Activated naive CD4-positive, alpha-beta T cell treated with anti-CD3 and anti-CD28 coated beads, Interleukin-2, amount 10 ng/mL, durations not matched to agents 7 days and 5 days (primary cell): ENCODE measurements at regions of chr5 and their contacts with region 1.

Region 1: GRCh38 chr5:134140530-134141201 is 26.2 kb downstream of the TCF7 start:
- DNase-seq: peak; percentile 77
- H3K4me3 Mint-ChIP-seq: no peak overlapping the region
- H3K27ac Mint-ChIP-seq: peak overlapping the region; percentile 72
- H3K4me1 Mint-ChIP-seq: peaks cover 68% of the 10 kb centered on the region
- H3K27me3 Mint-ChIP-seq: no peaks in the 10 kb centered on the region

Region 2: DNA sequence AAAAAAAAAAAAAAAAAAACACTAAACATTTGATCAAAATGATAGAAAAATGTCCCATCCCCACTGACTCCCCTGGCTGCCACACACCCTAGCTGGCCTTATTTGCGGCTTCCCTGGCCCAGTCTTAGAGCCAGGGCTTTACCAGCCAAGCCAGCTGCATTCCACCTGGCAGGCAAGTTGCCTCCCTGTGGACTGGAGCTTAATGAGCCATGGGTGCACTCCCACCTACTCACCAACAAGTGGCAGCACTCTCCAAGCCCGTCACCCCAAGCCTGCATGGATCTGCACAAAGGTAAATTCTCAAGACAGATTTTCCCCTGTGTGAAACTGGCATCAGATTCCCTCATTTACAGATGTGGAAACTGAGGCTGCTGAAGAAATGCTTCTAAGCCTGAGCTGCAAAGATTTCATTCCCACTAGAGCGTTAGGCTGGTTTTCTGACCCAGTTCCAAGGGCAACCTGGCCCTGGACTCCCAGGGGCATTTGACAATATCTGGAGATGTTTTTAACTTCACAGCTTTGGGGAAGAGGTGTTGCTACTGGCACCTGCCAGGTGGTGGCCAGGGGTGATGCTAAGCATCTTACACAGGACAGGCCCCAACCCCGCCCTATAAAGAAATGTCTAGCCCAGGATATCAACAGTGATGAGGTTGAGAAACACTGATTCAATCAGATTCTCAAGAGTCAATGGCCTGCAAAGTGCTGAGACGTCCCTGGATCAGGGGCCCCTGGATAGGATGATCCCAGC is 114.0 kb before region 1 on chr5:
- CTCF ChIA-PET with region 1: interaction called, 743 read pairs
- DNase-seq: peak; percentile 73
- H3K4me3 Mint-ChIP-seq: no peak overlapping the region
- H3K27ac Mint-ChIP-seq: no peak overlapping the region
- H3K4me1 Mint-ChIP-seq: no peaks in the 10 kb centered on the region
- H3K27me3 Mint-ChIP-seq: peaks cover 36% of the 10 kb centered on the region

Region 3: GRCh38 chr5:134070725-134071613 is 69.7 kb before region 1 on chr5:
- CTCF ChIA-PET with region 1: interaction called, 40 read pairs
- DNase-seq: peak; percentile 58
- H3K4me3 Mint-ChIP-seq: peak overlapping the region; percentile 53
- H3K27ac Mint-ChIP-seq: peak overlapping the region; percentile 16
- H3K4me1 Mint-ChIP-seq: peaks cover 58% of the 10 kb centered on the region
- H3K27me3 Mint-ChIP-seq: peaks cover 11% of the 10 kb centered on the region

Region 4: GRCh38 chr5:134394932-134395331 is 254.3 kb after region 1 on chr5:
- CTCF ChIA-PET with region 1: no interaction called
- DNase-seq: no peak
- H3K4me3 Mint-ChIP-seq: no peak overlapping the region
- H3K27ac Mint-ChIP-seq: no peak overlapping the region
- H3K4me1 Mint-ChIP-seq: no peaks in the 10 kb centered on the region
- H3K27me3 Mint-ChIP-seq: no peaks in the 10 kb centered on the region